ENCODE measurements at regions of chr9 and their contacts with region 1.

Region 1: GRCh38 chr9:5886114-5886939 is 4.4 kb upstream of the MLANA start:
- DNase-seq: peak; percentile 73

Region 2: DNA sequence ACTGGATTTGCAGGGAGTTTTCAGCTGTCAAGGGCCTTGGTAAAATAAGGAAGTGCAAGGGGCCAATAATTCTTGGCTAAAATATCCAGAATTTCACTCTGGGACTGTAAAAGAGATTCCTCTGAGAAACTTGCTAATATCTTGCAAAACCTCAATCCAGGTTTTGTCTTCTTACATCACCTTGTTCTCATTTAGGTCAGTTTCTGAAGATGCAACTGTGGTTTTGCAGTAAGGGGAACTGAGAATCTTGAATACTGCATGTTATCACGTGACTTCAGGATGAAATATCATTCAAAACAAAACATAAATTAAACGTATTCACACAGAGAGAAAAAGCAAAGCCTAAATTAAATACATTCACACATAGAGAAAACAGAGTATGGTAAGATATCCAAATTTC is 292.4 kb before region 1 on chr9:
- in situ Hi-C with region 1: no loop called
- DNase-seq: no peak

Region 3: DNA sequence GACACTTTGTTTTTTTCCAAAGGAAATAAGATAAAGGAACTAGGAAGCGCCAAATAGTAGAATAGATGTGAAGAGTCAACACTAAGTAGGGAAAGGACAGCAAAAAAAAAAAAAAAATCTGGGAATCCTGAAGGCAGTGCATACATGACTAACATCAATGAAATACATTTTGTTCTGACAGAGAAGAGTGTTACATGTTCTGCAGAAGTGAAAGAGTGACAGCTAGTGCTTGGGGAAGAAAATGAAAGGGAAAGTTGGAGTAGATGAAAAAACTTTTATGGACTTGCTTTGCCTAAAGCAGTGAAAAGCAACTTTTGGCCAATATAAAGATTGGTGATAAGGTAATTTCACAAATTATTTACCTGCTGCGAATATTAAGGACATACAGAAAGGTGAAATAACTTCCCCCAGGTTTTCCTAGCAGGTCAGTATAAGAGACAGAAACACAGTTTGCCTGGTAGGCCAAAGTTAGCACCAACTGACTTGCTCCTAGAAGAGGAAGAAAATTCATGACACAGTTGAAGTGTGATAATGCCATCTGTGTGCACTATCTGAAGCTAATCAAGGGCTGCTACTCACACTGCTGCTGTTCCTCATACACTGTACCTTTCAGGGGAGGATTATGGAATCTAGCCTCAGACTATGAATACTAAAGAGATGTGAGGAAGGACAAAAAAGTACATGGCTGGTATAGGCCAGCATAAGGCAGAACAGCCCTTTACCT is 90.5 kb after region 1 on chr9:
- in situ Hi-C with region 1: no loop called
- DNase-seq: peak; percentile 20

Region 4: GRCh38 chr9:6305954-6306563 is 419.7 kb after region 1 on chr9:
- in situ Hi-C with region 1: loop called (anchors 25 kb)
- DNase-seq: peak; percentile 40